ENCODE measurements at regions of chr17 and their contacts with region 1.

Region 1: GRCh38 chr17:18191967-18192366 is 8.3 kb downstream of the ALKBH5 start:
- DNase-seq: no peak
- ATAC-seq: peak; percentile 48
- H3K4me3 ChIP-seq: no peak overlapping the region
- H3K27ac ChIP-seq: no peak overlapping the region
- H3K4me1 ChIP-seq: no peaks in the 10 kb centered on the region; the same call in 1 of the 2 replicates
- H3K27me3 ChIP-seq: no peaks in the 10 kb centered on the region
- CTCF ChIP-seq: peak; percentile 18 to 49 (median 36); a peak in 4 of 6 replicates
- EP300 ChIP-seq: no peak
- POLR2A ChIP-seq: no peak
- RAD21 ChIP-seq: no peak

Region 2: DNA sequence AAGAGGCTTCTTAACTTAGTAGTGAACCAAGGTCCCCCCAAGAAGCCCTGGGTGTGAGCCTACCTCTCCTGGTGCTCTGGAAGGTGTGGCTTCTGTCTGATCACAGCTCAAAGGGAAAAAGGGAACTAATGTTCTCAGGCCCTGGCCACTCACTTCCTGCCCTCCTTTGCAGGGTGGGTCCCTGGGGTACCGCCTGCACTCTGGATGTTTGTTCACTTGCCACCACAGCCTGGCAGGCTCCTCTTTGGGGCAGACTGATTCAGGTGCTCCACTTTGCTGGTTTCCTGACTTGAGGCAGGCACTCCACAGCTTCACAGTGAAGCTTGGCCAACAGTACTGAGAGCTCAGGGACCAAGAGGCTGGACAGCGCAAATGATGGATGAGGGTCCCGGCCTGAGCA is 89.3 kb before region 1 on chr17:
- CTCF ChIA-PET with region 1: no interaction called
- POLR2A ChIA-PET with region 1: no interaction called
- RAD21 ChIA-PET with region 1: no interaction called
- SMC1A ChIA-PET with region 1: no interaction called
- in situ Hi-C with region 1: no loop called
- intact Hi-C with region 1: no loop called
- DNase-seq: no peak
- ATAC-seq: peak; percentile 48
- H3K4me3 ChIP-seq: no peak overlapping the region
- H3K27ac ChIP-seq: no peak overlapping the region
- H3K4me1 ChIP-seq: no peaks in the 10 kb centered on the region
- H3K27me3 ChIP-seq: no peaks in the 10 kb centered on the region
- CTCF ChIP-seq: no peak
- EP300 ChIP-seq: no peak
- POLR2A ChIP-seq: no peak
- RAD21 ChIP-seq: no peak

Region 3: DNA sequence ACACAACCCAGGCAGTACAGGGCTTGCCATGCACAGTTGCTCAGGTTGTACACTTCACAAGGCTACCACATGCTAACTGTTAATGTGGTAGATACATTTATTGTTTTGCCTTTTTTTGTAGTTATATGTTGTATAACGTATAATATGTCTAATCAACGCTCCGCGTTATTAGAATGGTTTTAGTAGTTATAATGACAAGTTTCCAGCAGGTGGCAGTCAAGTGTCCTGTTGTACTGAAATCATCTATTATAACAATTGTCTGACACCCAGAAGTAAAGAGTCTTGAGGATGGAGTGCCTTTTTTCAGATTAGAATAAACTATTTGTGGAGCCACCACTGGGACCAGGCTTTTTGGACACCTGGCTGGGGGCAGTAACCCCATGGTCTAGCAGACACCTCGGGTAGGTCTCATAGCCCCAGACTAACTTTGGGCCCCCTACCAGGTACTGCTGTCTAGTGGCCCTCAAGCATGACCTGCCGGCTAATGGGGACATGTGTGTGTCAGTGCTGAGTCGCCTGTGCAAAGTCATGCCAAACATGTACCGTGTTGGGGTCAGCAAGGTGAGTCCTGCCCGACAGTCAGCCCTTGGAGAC is 50.7 kb before region 1 on chr17:
- CTCF ChIA-PET with region 1: interaction called, 43 read pairs
- POLR2A ChIA-PET with region 1: no interaction called
- RAD21 ChIA-PET with region 1: interaction called, 28 read pairs
- SMC1A ChIA-PET with region 1: interaction called, 5 read pairs
- in situ Hi-C with region 1: no loop called
- intact Hi-C with region 1: loop called (anchors 2 kb)
- DNase-seq: no peak
- ATAC-seq: peak; percentile 72
- H3K4me3 ChIP-seq: no peak overlapping the region
- H3K27ac ChIP-seq: no peak overlapping the region
- H3K4me1 ChIP-seq: no peaks in the 10 kb centered on the region
- H3K27me3 ChIP-seq: no peaks in the 10 kb centered on the region
- CTCF ChIP-seq: peak; percentile 40 to 69 (median 60)
- EP300 ChIP-seq: no peak
- POLR2A ChIP-seq: no peak
- RAD21 ChIP-seq: peak; percentile 70

Region 4: DNA sequence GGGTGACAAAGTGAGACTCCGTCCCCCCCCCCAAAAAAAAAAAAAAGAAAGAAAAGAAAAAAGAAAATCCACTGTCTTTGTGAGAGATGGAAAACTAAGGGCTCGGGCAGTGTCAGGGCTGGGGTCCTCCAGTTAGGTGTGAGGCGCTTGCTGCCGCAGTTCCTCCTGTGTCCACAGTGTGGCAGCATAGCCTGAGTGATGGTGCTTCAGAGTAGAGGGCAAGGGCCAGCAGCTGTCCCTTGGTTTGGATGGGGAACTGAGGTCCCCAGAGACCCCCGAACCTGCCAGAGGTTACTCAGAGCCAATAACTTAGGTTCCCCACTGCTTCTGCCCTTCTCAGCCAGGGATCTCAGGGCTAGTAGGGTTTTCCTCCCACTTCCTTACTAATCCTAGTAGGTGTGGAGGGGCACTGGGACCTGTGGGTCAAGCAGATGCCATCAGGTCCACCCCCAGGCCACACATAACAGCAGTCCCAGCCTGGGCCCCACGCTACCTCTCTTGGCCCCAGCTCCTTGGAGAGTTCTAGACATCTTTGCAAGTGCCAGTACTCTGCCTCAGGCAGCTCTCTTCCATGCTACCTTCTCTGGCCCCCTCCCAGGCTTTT is 25.5 kb after region 1 on chr17:
- CTCF ChIA-PET with region 1: interaction called, 24 read pairs
- POLR2A ChIA-PET with region 1: no interaction called
- RAD21 ChIA-PET with region 1: no interaction called
- SMC1A ChIA-PET with region 1: interaction called, 3 read pairs
- in situ Hi-C with region 1: no loop called
- intact Hi-C with region 1: no loop called
- DNase-seq: peak; percentile 2
- ATAC-seq: peak; percentile 96
- H3K4me3 ChIP-seq: no peak overlapping the region
- H3K27ac ChIP-seq: no peak overlapping the region
- H3K4me1 ChIP-seq: peaks cover 10% of the 10 kb centered on the region
- H3K27me3 ChIP-seq: no peaks in the 10 kb centered on the region
- CTCF ChIP-seq: peak; percentile 94 to 99 (median 96)
- EP300 ChIP-seq: no peak
- POLR2A ChIP-seq: no peak
- RAD21 ChIP-seq: peak; percentile 79